ENCODE measurements at regions of chr19 and their contacts with region 1.

Region 1: GRCh38 chr19:4638828-4639530 is at the start of gene TNFAIP8L1:
- DNase-seq: peak; percentile 97
- ATAC-seq: peak; percentile 91
- H3K4me3 ChIP-seq: peak within 1 kb of the TSS; percentile 74 to 96 (median 93)
- H3K4me3 Mint-ChIP-seq: peak within 1 kb of the TSS; percentile 99
- H3K27ac ChIP-seq: peak within 1 kb of the TSS; percentile 86 to 88
- H3K27ac Mint-ChIP-seq: peak within 1 kb of the TSS; percentile 94
- H3K4me1 ChIP-seq: peaks cover 34 to 72% of the 10 kb centered on the region in 2 donors
- H3K4me1 Mint-ChIP-seq: peaks cover 40% of the 10 kb centered on the region
- H3K27me3 ChIP-seq: peaks cover 0 to 3% (median 0%) of the 10 kb centered on the region in 4 experiments
- H3K27me3 Mint-ChIP-seq: no peaks in the 10 kb centered on the region
- CTCF ChIP-seq: no peak
- total RNA-seq, gene TNFAIP8L1: 20.9 and 21.7 TPM in 2 replicates

Region 2: GRCh38 chr19:3505598-3506383 is 1133.2 kb before region 1 on chr19 and contains the start of gene FZR1:
- CTCF ChIA-PET with region 1: no interaction called
- POLR2A ChIA-PET with region 1: no interaction called
- intact Hi-C with region 1: loop called (anchors 5 kb)
- DNase-seq: peak; percentile 100
- ATAC-seq: peak; percentile 91
- H3K4me3 ChIP-seq: peak within 1 kb of the TSS; percentile 74 to 95 (median 77)
- H3K4me3 Mint-ChIP-seq: peak within 1 kb of the TSS; percentile 92
- H3K27ac ChIP-seq: peak within 1 kb of the TSS; percentile 92 to 94
- H3K27ac Mint-ChIP-seq: peak within 1 kb of the TSS; percentile 99
- H3K4me1 ChIP-seq: peaks cover 12 to 21% of the 10 kb centered on the region in 2 donors
- H3K4me1 Mint-ChIP-seq: peaks cover 49% of the 10 kb centered on the region
- H3K27me3 ChIP-seq: no peaks in the 10 kb centered on the region
- H3K27me3 Mint-ChIP-seq: no peaks in the 10 kb centered on the region
- CTCF ChIP-seq: no peak
- total RNA-seq, gene FZR1: 96.1 and 105 TPM in 2 replicates

Region 3: GRCh38 chr19:4557971-4558941 is 80.7 kb before region 1 on chr19:
- CTCF ChIA-PET with region 1: interaction called, 15 read pairs
- POLR2A ChIA-PET with region 1: no interaction called
- intact Hi-C with region 1: loop called (anchors 5 kb)
- DNase-seq: peak; percentile 52
- ATAC-seq: no peak
- H3K4me3 ChIP-seq: no peak overlapping the region
- H3K4me3 Mint-ChIP-seq: no peak overlapping the region
- H3K27ac ChIP-seq: no peak overlapping the region
- H3K27ac Mint-ChIP-seq: no peak overlapping the region
- H3K4me1 ChIP-seq: peaks cover 0 to 4% of the 10 kb centered on the region in 2 donors
- H3K4me1 Mint-ChIP-seq: peaks cover 3% of the 10 kb centered on the region
- H3K27me3 ChIP-seq: peaks cover 0 to 11% (median 2%) of the 10 kb centered on the region in 4 experiments
- H3K27me3 Mint-ChIP-seq: peaks cover 5% of the 10 kb centered on the region
- CTCF ChIP-seq: peak; percentile 99

Region 4: GRCh38 chr19:4576016-4576933 is 62.7 kb before region 1 on chr19:
- CTCF ChIA-PET with region 1: interaction called, 51 read pairs
- POLR2A ChIA-PET with region 1: no interaction called
- intact Hi-C with region 1: loop called (anchors 1 kb)
- DNase-seq: peak; percentile 71
- ATAC-seq: peak; percentile 73
- H3K4me3 ChIP-seq: no peak overlapping the region
- H3K4me3 Mint-ChIP-seq: no peak overlapping the region
- H3K27ac ChIP-seq: no peak overlapping the region
- H3K27ac Mint-ChIP-seq: no peak overlapping the region
- H3K4me1 ChIP-seq: peaks cover 0 to 3% of the 10 kb centered on the region in 2 donors
- H3K4me1 Mint-ChIP-seq: no peaks in the 10 kb centered on the region
- H3K27me3 ChIP-seq: peaks cover 0 to 53% (median 21%) of the 10 kb centered on the region in 4 experiments
- H3K27me3 Mint-ChIP-seq: peaks cover 33% of the 10 kb centered on the region
- CTCF ChIP-seq: peak; percentile 72

Region 5: DNA sequence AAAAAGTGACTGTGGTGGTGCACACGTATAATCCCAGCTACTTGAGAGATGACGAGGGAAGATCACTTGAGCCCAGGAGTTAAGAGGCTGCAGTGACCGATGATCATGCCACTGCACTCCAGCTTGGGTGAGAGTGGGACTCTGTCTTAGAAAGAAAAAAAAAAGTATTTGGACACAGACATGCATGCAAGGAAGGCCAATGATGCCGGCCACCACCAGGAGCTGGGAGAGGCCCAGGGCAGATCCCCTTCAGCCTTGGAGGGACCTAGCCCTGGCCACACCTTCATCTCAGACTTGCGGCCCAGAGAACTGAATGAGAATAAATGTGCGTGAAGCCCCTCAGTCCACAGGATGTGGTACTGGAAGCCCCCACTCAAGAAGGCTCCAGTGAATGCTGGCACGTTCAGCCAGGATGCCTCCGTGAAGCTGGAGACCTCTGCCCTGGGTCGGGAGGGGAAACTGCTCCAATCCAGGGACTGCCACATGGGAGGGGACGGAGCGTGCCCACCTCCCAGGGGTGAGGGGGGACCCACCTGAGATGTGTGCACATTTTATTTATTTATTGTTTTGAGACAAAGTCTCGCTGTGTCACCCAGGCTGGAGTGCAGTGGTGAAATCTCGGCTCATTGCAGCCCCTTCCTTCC is 14.9 kb after region 1 on chr19:
- CTCF ChIA-PET with region 1: interaction called, 18 read pairs
- POLR2A ChIA-PET with region 1: interaction called, 7 read pairs
- intact Hi-C with region 1: no loop called
- DNase-seq: no peak
- ATAC-seq: no peak
- H3K4me3 ChIP-seq: no peak overlapping the region
- H3K4me3 Mint-ChIP-seq: no peak overlapping the region
- H3K27ac ChIP-seq: no peak overlapping the region
- H3K27ac Mint-ChIP-seq: no peak overlapping the region
- H3K4me1 ChIP-seq: no peaks in the 10 kb centered on the region
- H3K4me1 Mint-ChIP-seq: peaks cover 9% of the 10 kb centered on the region
- H3K27me3 ChIP-seq: no peaks in the 10 kb centered on the region
- H3K27me3 Mint-ChIP-seq: no peaks in the 10 kb centered on the region
- CTCF ChIP-seq: no peak

Region 6: DNA sequence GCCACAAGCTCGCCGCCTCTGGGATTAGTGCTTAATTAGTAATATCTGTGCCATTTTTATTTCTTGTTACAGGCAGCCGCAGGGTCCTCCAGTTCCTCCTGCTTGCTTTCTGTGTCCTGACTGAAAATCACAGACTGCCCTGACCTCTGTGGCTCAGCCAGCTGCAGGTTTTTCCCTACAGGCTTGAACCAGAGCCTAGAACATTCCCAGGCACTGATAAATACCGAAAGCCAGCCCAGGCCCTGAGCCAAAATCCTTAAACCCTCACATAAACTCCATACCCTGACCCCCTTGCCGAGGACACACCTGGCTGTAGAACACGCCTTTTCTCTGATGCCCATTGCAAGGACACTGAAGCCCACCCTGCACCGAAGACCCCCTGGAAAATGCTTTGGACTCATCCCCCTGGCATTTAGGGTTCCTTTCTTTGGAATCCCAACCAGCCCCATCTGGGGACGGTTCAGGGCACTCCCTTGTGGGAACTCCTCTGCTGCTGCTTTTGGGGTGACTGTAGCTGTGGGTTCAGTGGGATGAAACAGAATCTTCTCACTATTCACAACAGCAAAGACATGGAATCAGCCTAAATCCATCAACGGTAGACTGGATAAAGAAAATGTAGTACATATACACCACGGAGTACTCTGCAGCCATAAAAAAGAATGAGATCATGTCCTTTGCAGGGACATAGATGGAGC is 69.1 kb after region 1 on chr19:
- CTCF ChIA-PET with region 1: no interaction called
- POLR2A ChIA-PET with region 1: no interaction called
- intact Hi-C with region 1: no loop called
- DNase-seq: no peak
- ATAC-seq: no peak
- H3K4me3 ChIP-seq: no peak overlapping the region
- H3K4me3 Mint-ChIP-seq: no peak overlapping the region
- H3K27ac ChIP-seq: no peak overlapping the region
- H3K27ac Mint-ChIP-seq: no peak overlapping the region
- H3K4me1 ChIP-seq: no peaks in the 10 kb centered on the region
- H3K4me1 Mint-ChIP-seq: no peaks in the 10 kb centered on the region
- H3K27me3 ChIP-seq: no peaks in the 10 kb centered on the region
- H3K27me3 Mint-ChIP-seq: no peaks in the 10 kb centered on the region
- CTCF ChIP-seq: no peak